Activated T-helper 2 cell treated with anti-CD3 and anti-CD28 coated beads, Interferon-gamma antibody, Interleukin-2, Interleukin-4, amounts not matched to agents 10 μg/mL and 5 μg/mL and 100 μg/mL, durations not matched to agents 14 hours and 24 hours and 36 hours (primary cell): ENCODE measurements at regions of chr17 and their contacts with region 1.

Region 1: DNA sequence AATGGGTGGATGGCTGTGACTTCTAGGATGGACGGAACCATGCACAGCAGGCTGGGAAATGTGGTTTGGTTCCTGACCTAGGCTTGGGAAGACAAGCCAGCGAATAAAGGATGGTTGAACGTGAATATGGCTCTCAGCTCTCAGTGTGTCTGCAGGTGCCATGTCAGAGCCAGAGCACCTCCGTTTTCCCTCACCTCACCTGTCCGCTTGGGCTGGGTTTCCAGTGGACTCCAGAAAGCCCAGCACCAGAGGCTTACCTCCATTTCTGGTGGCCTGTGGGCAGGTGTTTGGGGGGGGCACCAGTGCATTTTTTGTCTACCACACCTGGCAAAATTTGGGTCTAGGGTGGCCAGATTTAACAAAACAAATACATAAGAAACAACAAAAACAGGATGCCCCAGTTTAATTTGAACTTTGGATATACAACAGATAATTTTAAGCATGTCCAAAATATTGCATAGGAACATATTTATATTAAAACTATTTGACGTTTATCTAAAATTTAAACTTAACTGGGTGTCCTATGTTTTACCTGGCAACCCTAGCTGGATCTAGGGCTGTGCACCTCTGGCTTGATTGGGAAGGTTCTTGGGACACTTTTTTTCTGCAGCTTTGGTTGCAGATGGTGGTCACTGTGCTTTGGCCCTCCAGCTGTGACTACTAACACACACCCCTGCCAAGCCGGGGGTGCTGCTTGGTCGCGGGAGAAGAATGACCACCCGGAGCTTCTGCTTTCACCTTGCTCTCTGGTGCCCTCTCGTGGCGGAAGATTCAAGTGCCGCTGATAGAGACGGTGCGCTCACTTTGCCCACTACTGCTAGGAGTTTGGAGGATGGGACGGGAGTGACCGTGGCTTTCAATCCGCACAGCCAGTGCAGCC is 6.3 kb downstream of the SPACA3 start:
- DNase-seq: peak; percentile 61
- H3K4me3 Mint-ChIP-seq: no peak overlapping the region
- H3K27ac Mint-ChIP-seq: no peak overlapping the region
- H3K4me1 Mint-ChIP-seq: peaks cover 9% of the 10 kb centered on the region
- H3K27me3 Mint-ChIP-seq: peaks cover 26% of the 10 kb centered on the region

Region 2: GRCh38 chr17:32783602-32784001 is 214.4 kb before region 1 on chr17:
- intact Hi-C with region 1: loop called (anchors 5 kb)
- DNase-seq: no peak
- H3K4me3 Mint-ChIP-seq: no peak overlapping the region
- H3K27ac Mint-ChIP-seq: no peak overlapping the region
- H3K4me1 Mint-ChIP-seq: peaks cover 4% of the 10 kb centered on the region
- H3K27me3 Mint-ChIP-seq: peaks cover 7% of the 10 kb centered on the region

Region 3: DNA sequence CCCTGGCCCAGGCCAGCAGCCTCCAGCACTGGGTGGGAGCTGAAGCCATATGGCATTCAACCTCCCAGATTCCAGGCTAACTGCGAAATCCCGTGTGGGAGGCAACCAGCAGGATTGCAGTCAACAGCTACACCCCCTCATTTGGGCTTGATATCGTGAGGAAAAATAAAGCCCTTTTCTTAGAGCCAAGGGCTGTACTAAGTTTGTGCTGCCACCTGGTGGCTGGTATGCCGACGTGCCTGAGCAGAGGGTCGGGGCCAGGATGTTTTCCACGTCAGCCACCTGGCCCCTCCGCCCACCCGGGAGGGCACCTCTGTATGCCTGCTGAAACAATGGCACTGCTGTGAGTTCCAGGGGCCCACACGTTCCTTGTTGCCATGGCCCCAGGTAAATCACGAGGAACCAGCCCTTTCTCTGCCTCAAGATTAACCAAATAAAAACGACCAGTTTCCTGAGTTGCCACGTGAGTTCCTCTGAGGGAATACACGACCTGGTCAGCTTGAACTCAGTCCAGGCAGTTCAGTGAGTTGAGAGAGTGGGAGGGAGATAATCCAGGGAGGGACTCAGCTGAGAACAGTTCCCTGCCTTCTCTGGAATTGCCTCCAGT is 61.0 kb before region 1 on chr17:
- intact Hi-C with region 1: loop called (anchors 2 kb)
- DNase-seq: peak; percentile 56
- H3K4me3 Mint-ChIP-seq: no peak overlapping the region
- H3K27ac Mint-ChIP-seq: no peak overlapping the region
- H3K4me1 Mint-ChIP-seq: peaks cover 6% of the 10 kb centered on the region
- H3K27me3 Mint-ChIP-seq: peaks cover 4% of the 10 kb centered on the region

Region 4: GRCh38 chr17:32960506-32961214 is 37.3 kb before region 1 on chr17:
- intact Hi-C with region 1: loop called (anchors 5 kb)
- DNase-seq: no peak
- H3K4me3 Mint-ChIP-seq: no peak overlapping the region
- H3K27ac Mint-ChIP-seq: no peak overlapping the region
- H3K4me1 Mint-ChIP-seq: peaks cover 14% of the 10 kb centered on the region
- H3K27me3 Mint-ChIP-seq: peaks cover 23% of the 10 kb centered on the region

Region 5: GRCh38 chr17:33038740-33039139 is 40.7 kb after region 1 on chr17:
- intact Hi-C with region 1: no loop called
- DNase-seq: peak; percentile 15
- H3K4me3 Mint-ChIP-seq: no peak overlapping the region
- H3K27ac Mint-ChIP-seq: no peak overlapping the region
- H3K4me1 Mint-ChIP-seq: no peaks in the 10 kb centered on the region
- H3K27me3 Mint-ChIP-seq: peaks cover 20% of the 10 kb centered on the region